Heart right ventricle (tissue), 16 donors: ENCODE measurements at regions of chr7 and their contacts with region 1.

Region 1: DNA sequence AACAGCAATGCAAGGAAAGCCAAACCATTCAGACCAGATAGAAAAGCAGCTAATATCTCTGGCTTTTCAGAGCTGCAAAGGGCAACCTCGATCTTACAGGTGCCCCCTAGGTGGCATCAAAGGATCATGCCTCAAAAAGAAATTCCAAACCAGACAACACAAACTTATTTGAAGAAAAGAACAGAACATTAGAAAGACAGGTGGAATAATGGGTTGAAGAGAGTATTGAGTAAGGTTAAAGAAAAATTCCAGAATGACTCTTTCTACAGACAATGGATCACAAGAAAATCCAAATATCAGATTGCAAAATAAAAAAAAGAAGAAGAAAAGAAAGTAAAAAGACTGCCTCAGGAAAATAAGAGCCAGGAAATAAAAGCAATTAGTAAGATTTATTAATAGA is 213.7 kb downstream of the ELMO1 start:
- DNase-seq: no peak
- ATAC-seq: peak in 1 of 8 donors; percentile 33
- H3K4me3 ChIP-seq: no peak overlapping the region
- H3K27ac ChIP-seq: no peak overlapping the region
- H3K4me1 ChIP-seq: peaks cover 0 to 20% (median 3%) of the 10 kb centered on the region in 9 donors
- H3K27me3 ChIP-seq: no peaks in the 10 kb centered on the region
- CTCF ChIP-seq: peak in 8 of 9 donors; percentile 21 to 71 (median 60)

Region 2: DNA sequence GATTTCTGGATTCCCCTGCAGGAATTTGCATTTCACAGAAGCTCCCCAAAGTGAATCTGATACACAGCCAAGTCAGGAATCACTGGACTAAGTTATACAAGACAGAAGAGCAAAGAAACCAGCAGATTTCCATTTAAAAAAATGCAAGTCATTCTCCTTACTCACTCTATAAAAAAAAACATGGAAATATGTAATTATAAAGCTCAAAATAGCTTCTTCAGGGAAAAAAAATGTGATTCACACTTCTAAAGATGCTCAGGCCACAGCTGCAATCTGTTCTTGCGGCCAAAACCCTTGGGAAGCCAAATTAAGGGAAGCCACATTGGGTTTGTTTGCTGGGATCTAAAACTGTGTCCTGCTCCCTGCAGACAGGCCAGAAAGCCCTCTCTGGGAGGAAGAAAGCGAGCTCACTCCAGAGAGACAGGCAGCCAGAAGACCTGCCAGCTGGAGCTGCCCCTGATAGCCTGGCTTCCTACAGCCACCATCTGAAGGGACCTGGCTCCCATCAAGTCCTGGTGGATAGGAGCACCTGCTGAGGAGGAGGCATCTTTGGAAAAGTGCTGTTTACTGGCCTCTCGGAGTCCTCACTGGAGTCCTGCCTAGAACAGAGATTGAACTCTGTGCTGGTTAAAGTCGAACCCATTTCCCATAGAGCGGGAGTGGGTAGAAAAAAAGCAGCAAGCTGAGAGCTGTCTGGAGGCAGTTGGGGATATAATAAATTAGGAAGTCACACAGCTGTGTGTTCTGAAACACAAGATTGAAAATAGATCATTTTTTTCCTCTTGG is 151.4 kb before region 1 on chr7:
- intact Hi-C with region 1: no loop called
- DNase-seq: peak; percentile 17 to 64
- ATAC-seq: peak in 7 of 8 donors; percentile 82 to 91 (median 86)
- H3K4me3 ChIP-seq: no peak overlapping the region
- H3K27ac ChIP-seq: peak overlapping the region in 9 of 10 donors; percentile 31 to 68 (median 63)
- H3K4me1 ChIP-seq: peaks cover 0 to 31% (median 14%) of the 10 kb centered on the region in 9 donors
- H3K27me3 ChIP-seq: no peaks in the 10 kb centered on the region
- CTCF ChIP-seq: no peak

Region 3: GRCh38 chr7:37495574-37496184 is 260.8 kb after region 1 on chr7:
- intact Hi-C with region 1: loop called in 5 of 10 experiments (anchors 10 kb)
- DNase-seq: no peak
- ATAC-seq: peak in 1 of 8 donors; percentile 37
- H3K4me3 ChIP-seq: no peak overlapping the region
- H3K27ac ChIP-seq: no peak overlapping the region
- H3K4me1 ChIP-seq: no peaks in the 10 kb centered on the region
- H3K27me3 ChIP-seq: no peaks in the 10 kb centered on the region
- CTCF ChIP-seq: peak; percentile 72 to 86 (median 78)

Region 4: GRCh38 chr7:37504801-37505200 is 269.9 kb after region 1 on chr7:
- intact Hi-C with region 1: loop called in 2 of 10 experiments (anchors 10 kb)
- DNase-seq: no peak
- ATAC-seq: peak in 4 of 8 donors; percentile 35 to 64 (median 60)
- H3K4me3 ChIP-seq: no peak overlapping the region
- H3K27ac ChIP-seq: peak overlapping the region in 1 of 10 donors; percentile 32
- H3K4me1 ChIP-seq: peaks cover 0 to 21% (median 0%) of the 10 kb centered on the region in 9 donors
- H3K27me3 ChIP-seq: no peaks in the 10 kb centered on the region
- CTCF ChIP-seq: no peak

Region 5: DNA sequence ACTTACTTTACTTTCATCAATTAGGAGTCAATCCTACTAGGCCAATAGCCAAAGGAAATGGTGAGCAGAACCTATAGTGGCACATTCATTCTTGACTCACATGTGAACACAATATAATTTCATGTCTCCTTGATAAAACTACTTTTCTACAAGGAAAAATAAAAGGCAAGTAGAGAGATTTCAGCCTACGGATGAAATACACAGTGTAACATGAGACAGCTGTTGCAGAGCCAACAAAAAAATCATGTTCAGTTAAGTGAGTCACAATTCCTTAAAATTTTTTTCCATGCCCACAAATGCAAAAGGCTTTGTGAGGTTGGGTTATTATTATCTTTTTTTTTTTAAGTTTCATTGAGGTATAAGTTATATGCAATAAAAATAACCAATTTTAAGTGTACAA is 503.4 kb after region 1 on chr7:
- intact Hi-C with region 1: loop called in 1 of 10 experiments (anchors 5 kb)
- DNase-seq: no peak
- ATAC-seq: no peak
- H3K4me3 ChIP-seq: no peak overlapping the region
- H3K27ac ChIP-seq: no peak overlapping the region
- H3K4me1 ChIP-seq: no peaks in the 10 kb centered on the region
- H3K27me3 ChIP-seq: no peaks in the 10 kb centered on the region
- CTCF ChIP-seq: no peak

Region 6: DNA sequence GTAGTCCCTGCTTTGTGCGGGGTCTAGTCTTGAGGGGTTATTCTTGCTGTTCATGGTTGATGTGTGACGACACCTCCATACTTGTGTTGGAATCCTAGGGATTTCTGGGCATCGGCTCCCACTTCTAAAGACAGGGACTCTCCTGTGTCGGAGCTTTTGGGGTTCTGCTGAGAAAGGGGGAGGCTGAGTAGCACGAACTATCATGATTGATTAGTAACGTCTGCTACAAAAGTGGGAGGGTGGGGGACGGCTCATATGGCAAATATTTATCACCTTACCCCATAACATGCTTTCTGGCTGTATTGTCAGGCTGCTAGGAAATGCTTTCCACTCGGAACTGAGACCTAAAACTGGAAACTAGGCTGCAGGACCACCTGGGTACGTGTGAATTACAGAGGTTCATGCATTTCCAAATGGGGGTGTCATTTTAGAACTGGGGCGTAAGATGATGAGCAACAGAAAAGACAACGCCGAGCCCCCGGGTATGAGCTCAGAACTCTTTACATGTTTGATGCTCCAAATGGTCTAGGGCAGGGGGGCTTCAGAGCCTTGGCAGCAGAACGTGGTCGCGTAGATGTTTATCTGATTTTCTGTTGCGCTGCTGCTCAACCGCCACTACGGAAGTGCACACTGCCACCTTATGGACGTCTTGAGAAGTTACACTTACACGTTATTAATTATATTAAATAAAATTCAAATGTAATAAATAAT is 598.3 kb after region 1 on chr7:
- intact Hi-C with region 1: loop called in 4 of 10 experiments (anchors 2 to 10 kb)
- DNase-seq: peak; percentile 17 to 19
- ATAC-seq: peak in 3 of 8 donors; percentile 33 to 61 (median 40)
- H3K4me3 ChIP-seq: peak overlapping the region in 7 of 10 donors; percentile 7 to 48 (median 40)
- H3K27ac ChIP-seq: no peak overlapping the region
- H3K4me1 ChIP-seq: peaks cover 0 to 18% (median 5%) of the 10 kb centered on the region in 9 donors
- H3K27me3 ChIP-seq: peaks cover 0 to 7% (median 0%) of the 10 kb centered on the region in 7 donors
- CTCF ChIP-seq: peak; percentile 66 to 86 (median 76)